ENCODE measurements at regions of chr7 and their contacts with region 1.

Region 1: GRCh38 chr7:80428161-80429054 is 83.5 kb downstream of the GNAT3 start:
- DNase-seq: peak; percentile 79
- ATAC-seq: peak; percentile 89
- H3K4me3 ChIP-seq: no peak overlapping the region
- H3K27ac ChIP-seq: no peak overlapping the region
- H3K4me1 ChIP-seq: peaks cover 3% of the 10 kb centered on the region
- H3K27me3 ChIP-seq: no peaks in the 10 kb centered on the region
- CTCF ChIP-seq: peak; percentile 84
- POLR2A ChIP-seq: no peak
- RAD21 ChIP-seq: peak; percentile 90

Region 2: GRCh38 chr7:79410345-79410744 is 1018.1 kb before region 1 on chr7:
- CTCF ChIA-PET with region 1: no interaction called
- POLR2A ChIA-PET with region 1: no interaction called
- dilution Hi-C with region 1: no loop called
- in situ Hi-C with region 1: no loop called
- intact Hi-C with region 1: no loop called
- DNase-seq: peak; percentile 27
- ATAC-seq: peak; percentile 24; the same call in 1 of the 2 replicates
- H3K4me3 ChIP-seq: no peak overlapping the region
- H3K27ac ChIP-seq: no peak overlapping the region
- H3K4me1 ChIP-seq: peaks cover 2% of the 10 kb centered on the region; the same call in 1 of the 2 replicates
- H3K27me3 ChIP-seq: no peaks in the 10 kb centered on the region
- CTCF ChIP-seq: no peak
- POLR2A ChIP-seq: no peak
- RAD21 ChIP-seq: no peak

Region 3: DNA sequence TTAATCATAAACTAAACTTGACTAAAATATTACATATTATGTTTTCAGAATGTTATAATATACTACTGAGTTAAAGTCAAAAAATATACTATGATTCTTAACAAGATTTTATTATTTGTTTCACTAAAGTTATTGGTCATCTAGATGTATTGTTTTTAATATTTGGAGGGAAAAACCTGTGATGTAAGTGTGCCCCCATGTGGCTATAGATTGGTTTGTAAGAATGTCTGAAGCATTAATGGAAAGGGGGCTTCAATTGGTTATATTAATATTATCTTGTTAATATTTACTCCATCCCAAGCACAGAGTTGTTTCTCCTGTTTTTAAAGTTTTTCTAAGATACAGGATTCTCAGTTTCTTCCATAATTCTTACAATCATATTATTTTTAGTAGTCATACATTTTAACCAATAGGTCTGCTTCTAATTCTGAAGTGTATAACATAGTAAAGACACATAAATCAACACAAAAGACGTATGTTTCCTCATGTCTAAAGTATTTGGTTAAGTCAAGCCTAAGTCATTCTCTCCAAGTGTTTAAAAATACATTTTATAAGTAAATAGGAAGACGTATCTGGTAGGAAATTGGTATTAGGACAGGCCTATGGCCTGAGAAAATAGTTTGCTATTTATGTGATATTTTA is 25.4 kb after region 1 on chr7:
- CTCF ChIA-PET with region 1: no interaction called
- POLR2A ChIA-PET with region 1: no interaction called
- dilution Hi-C with region 1: no loop called
- in situ Hi-C with region 1: no loop called
- intact Hi-C with region 1: loop called (anchors 2 kb)
- DNase-seq: peak; percentile 56
- ATAC-seq: peak; percentile 48; the same call in 1 of the 2 replicates
- H3K4me3 ChIP-seq: no peak overlapping the region
- H3K27ac ChIP-seq: no peak overlapping the region
- H3K4me1 ChIP-seq: peaks cover 7% of the 10 kb centered on the region; the same call in 1 of the 2 replicates
- H3K27me3 ChIP-seq: no peaks in the 10 kb centered on the region
- CTCF ChIP-seq: peak; percentile 59
- POLR2A ChIP-seq: no peak
- RAD21 ChIP-seq: peak; percentile 71

Region 4: GRCh38 chr7:80659120-80660055 is 231.0 kb after region 1 on chr7:
- CTCF ChIA-PET with region 1: interaction called, 15 read pairs
- POLR2A ChIA-PET with region 1: no interaction called
- dilution Hi-C with region 1: no loop called
- in situ Hi-C with region 1: loop called (anchors 5 kb)
- intact Hi-C with region 1: loop called (anchors 1 kb)
- DNase-seq: peak; percentile 62
- ATAC-seq: peak; percentile 90
- H3K4me3 ChIP-seq: no peak overlapping the region
- H3K27ac ChIP-seq: peak overlapping the region; percentile 11; the same call in 1 of the 2 replicates
- H3K4me1 ChIP-seq: peaks cover 2% of the 10 kb centered on the region
- H3K27me3 ChIP-seq: no peaks in the 10 kb centered on the region
- CTCF ChIP-seq: peak; percentile 74
- POLR2A ChIP-seq: no peak
- RAD21 ChIP-seq: peak; percentile 79

Region 5: GRCh38 chr7:80665526-80665925 is 237.1 kb after region 1 on chr7:
- CTCF ChIA-PET with region 1: interaction called, 15 read pairs
- POLR2A ChIA-PET with region 1: no interaction called
- dilution Hi-C with region 1: no loop called
- in situ Hi-C with region 1: no loop called
- intact Hi-C with region 1: no loop called
- DNase-seq: no peak
- ATAC-seq: no peak
- H3K4me3 ChIP-seq: no peak overlapping the region
- H3K27ac ChIP-seq: no peak overlapping the region
- H3K4me1 ChIP-seq: no peaks in the 10 kb centered on the region
- H3K27me3 ChIP-seq: no peaks in the 10 kb centered on the region
- CTCF ChIP-seq: no peak
- POLR2A ChIP-seq: no peak
- RAD21 ChIP-seq: no peak

Region 6: GRCh38 chr7:80681272-80681885 is 253.0 kb after region 1 on chr7:
- CTCF ChIA-PET with region 1: interaction called, 8 read pairs
- POLR2A ChIA-PET with region 1: no interaction called
- dilution Hi-C with region 1: no loop called
- in situ Hi-C with region 1: no loop called
- intact Hi-C with region 1: loop called (anchors 1 kb)
- DNase-seq: peak; percentile 35
- ATAC-seq: peak; percentile 89
- H3K4me3 ChIP-seq: no peak overlapping the region
- H3K27ac ChIP-seq: no peak overlapping the region
- H3K4me1 ChIP-seq: no peaks in the 10 kb centered on the region
- H3K27me3 ChIP-seq: no peaks in the 10 kb centered on the region
- CTCF ChIP-seq: peak; percentile 56
- POLR2A ChIP-seq: no peak
- RAD21 ChIP-seq: peak; percentile 51

Region 7: GRCh38 chr7:81469869-81470723 is 1041.7 kb after region 1 on chr7:
- CTCF ChIA-PET with region 1: no interaction called
- POLR2A ChIA-PET with region 1: no interaction called
- dilution Hi-C with region 1: no loop called
- in situ Hi-C with region 1: loop called (anchors 25 kb)
- intact Hi-C with region 1: loop called (anchors 5 kb)
- DNase-seq: peak; percentile 81
- ATAC-seq: peak; percentile 94
- H3K4me3 ChIP-seq: no peak overlapping the region
- H3K27ac ChIP-seq: no peak overlapping the region
- H3K4me1 ChIP-seq: no peaks in the 10 kb centered on the region
- H3K27me3 ChIP-seq: no peaks in the 10 kb centered on the region
- CTCF ChIP-seq: peak; percentile 83
- POLR2A ChIP-seq: no peak
- RAD21 ChIP-seq: peak; percentile 89